ENCODE measurements at regions of chr16 and their contacts with region 1.

Region 1: DNA sequence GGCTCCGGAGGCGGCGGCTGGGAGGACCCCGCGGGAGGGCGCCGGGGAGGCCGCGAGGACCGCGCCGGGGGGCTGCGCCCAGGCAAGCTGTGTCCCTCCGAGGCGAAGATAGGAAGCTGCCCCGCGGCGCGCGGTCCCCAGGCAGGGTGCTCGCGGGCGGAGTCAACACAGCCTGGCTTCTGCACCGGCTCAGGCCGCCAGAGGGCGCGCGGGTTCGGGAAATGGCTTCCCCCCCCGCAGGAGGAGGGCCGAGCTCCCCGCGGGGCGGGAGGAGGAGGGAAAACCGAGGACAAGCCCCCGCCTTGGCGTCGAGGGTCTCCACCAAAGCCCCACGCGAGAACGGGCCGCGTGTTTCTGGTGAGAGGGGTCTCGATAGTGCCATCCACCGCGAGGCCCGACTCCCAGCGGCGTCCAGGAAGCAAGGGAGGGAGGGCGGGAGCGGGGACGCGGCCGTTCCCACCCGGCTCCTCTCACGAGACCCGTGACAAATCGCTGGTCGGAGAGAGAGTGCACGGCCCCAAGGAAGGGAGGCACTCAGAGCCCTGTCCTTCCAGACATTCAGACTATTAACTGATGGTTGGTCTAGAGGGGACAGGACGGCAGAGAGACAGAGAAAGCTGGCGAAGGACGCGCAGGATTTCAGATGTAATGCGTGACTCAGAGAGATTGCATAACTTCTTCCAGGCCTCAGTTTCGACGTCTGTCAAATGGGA is 64.4 kb upstream of the DNAJA2 start:
- DNase-seq: peak; percentile 90
- ATAC-seq: peak; percentile 99
- H3K4me3 Mint-ChIP-seq: peak overlapping the region; percentile 71
- H3K27ac Mint-ChIP-seq: no peak overlapping the region
- H3K4me1 Mint-ChIP-seq: peaks cover 8% of the 10 kb centered on the region
- H3K27me3 Mint-ChIP-seq: peaks cover 28% of the 10 kb centered on the region

Region 2: DNA sequence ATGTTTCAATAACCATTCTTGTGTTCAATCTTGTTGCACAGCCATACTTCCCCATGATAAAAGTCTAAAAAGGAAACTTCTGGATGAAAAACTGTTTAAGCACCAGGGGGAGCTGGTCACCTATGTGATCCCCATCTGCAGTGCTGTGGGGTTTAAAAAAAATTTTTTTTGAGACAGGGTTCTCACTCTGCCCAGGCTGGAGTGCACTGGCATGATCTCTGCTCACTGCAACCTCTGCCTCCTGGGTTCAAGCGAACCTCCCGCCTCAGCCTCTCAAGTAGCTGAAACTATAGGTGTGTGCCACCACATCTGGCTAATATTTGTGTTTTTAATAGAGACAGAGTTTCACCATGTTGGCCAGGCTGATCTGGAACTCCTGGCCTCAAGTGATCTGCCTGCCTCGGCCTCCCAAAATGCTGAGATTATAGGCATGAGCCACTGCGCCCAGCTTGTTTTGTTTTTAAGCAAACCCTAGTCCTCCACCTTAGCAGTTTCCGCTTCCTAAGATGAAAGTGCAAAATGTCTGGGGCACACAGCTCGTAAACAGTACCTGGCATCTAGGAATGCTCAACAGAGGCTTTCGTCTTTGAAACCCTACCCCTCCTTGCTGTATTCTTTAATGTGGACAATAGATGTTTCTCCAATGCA is 89.9 kb before region 1 on chr16:
- CTCF ChIA-PET with region 1: interaction called, 12 read pairs
- DNase-seq: peak; percentile 48
- ATAC-seq: peak; percentile 67
- H3K4me3 Mint-ChIP-seq: no peak overlapping the region
- H3K27ac Mint-ChIP-seq: no peak overlapping the region
- H3K4me1 Mint-ChIP-seq: peaks cover 21% of the 10 kb centered on the region
- H3K27me3 Mint-ChIP-seq: no peaks in the 10 kb centered on the region

Region 3: GRCh38 chr16:46973207-46973995 is 64.5 kb before region 1 on chr16 and contains the start of gene DNAJA2:
- CTCF ChIA-PET with region 1: interaction called, 26 read pairs
- DNase-seq: peak; percentile 93
- ATAC-seq: peak; percentile 93
- H3K4me3 Mint-ChIP-seq: peak within 1 kb of the TSS; percentile 91
- H3K27ac Mint-ChIP-seq: peak within 1 kb of the TSS; percentile 98
- H3K4me1 Mint-ChIP-seq: peaks cover 49% of the 10 kb centered on the region
- H3K27me3 Mint-ChIP-seq: no peaks in the 10 kb centered on the region
- total RNA-seq, gene DNAJA2: 55.6 to 70.2 TPM

Region 4: GRCh38 chr16:47008174-47008573 is 29.7 kb before region 1 on chr16:
- CTCF ChIA-PET with region 1: interaction called, 16 read pairs
- DNase-seq: no peak
- ATAC-seq: no peak
- H3K4me3 Mint-ChIP-seq: no peak overlapping the region
- H3K27ac Mint-ChIP-seq: no peak overlapping the region
- H3K4me1 Mint-ChIP-seq: peaks cover 4% of the 10 kb centered on the region
- H3K27me3 Mint-ChIP-seq: no peaks in the 10 kb centered on the region

Region 5: GRCh38 chr16:47446431-47446830 is 408.5 kb after region 1 on chr16:
- CTCF ChIA-PET with region 1: no interaction called
- DNase-seq: no peak
- ATAC-seq: no peak
- H3K4me3 Mint-ChIP-seq: no peak overlapping the region
- H3K27ac Mint-ChIP-seq: no peak overlapping the region
- H3K4me1 Mint-ChIP-seq: no peaks in the 10 kb centered on the region
- H3K27me3 Mint-ChIP-seq: no peaks in the 10 kb centered on the region

Region 6: GRCh38 chr16:48156790-48157209 is 1118.9 kb after region 1 on chr16:
- CTCF ChIA-PET with region 1: interaction called, 10 read pairs
- DNase-seq: peak; percentile 84
- ATAC-seq: peak; percentile 66
- H3K4me3 Mint-ChIP-seq: no peak overlapping the region
- H3K27ac Mint-ChIP-seq: no peak overlapping the region
- H3K4me1 Mint-ChIP-seq: peaks cover 23% of the 10 kb centered on the region
- H3K27me3 Mint-ChIP-seq: peaks cover 48% of the 10 kb centered on the region

Region 7: DNA sequence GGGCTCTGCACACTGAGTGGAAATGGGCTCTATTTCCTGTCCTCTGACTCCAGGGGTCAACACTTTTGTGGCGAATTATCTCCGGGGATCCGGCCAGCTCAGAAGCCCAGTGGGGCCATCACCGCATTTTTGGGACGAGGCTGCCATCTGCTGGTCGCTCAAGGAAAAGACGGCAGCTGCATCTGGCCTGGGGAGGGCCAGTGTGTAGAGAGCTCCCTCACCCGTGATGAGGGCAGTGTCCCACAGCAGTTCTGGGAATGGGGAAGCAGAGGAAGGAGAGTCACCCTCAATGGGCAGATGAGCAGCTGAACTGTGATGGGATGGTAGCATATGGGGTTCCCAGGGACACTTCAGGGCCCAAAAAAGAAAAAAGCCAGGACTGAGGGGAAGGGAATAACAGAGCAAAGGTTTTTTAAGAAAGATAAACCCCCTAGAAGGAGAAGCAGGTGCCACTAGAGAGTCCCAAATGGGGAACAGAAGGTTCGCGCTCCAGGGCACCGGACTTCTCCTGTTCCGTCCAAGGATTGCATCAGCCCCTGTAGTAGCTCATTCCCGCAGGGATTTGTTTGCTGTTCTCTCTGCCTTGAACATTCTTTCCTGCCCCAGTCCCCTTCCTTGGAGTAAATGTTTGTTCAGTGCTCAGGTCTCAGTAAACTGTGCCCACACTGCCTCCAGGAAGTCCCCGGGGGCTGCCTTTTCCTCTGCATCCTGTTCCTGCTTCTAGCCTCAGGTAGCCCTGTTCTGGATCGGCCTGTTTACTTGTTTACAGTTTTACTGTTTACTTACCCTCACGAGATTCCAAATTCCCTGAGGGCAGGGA is 1127.2 kb after region 1 on chr16:
- CTCF ChIA-PET with region 1: interaction called, 16 read pairs
- DNase-seq: peak; percentile 74
- ATAC-seq: peak; percentile 88
- H3K4me3 Mint-ChIP-seq: no peak overlapping the region
- H3K27ac Mint-ChIP-seq: no peak overlapping the region
- H3K4me1 Mint-ChIP-seq: peaks cover 16% of the 10 kb centered on the region
- H3K27me3 Mint-ChIP-seq: peaks cover 19% of the 10 kb centered on the region

Measured in activated CD8-positive, alpha-beta memory T cell treated with anti-CD3 and anti-CD28 coated beads, Interleukin-2, amount 10 ng/mL, durations not matched to agents 7 days and 5 days (primary cell).